A549 (cell line): ENCODE measurements at regions of chr7 and their contacts with region 1.

Region 1: DNA sequence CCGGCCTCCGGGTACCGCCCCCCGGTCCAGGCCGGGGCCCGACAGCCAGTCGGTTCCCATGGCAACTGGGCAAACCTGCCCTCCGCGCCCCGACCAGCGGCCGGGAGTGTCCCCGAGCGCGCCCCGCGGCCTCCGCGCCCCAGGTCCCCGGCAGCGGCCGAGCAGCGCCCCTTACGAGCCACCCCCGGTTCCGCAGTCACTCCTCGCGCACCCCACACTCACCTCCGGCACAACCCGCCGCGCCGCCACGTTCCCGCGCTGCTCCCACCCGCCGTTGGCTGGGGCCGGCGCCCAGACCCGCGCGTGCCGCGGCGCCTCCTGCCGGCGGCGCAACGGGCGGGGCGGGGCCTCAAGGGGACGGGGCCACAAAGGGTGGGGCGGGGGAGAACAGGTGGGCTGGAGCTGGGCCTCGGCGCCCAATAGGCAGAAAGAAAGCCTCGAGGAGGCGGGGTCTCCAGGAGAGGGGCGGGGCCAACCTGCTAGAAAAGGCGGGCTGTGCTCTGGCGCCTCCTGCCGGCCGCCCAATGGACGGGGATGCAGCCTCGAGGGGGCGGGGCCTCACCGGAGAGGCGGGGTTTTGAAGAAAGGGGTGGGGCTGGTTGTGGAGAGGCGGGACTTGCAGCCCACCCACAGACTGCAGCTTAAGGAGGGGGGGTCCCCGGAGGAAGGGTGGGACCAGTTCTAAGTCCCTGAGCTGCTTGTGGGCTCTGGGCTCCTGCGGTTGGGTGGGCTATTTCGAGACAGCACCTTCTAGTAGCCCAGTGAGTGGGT is at the start of gene RADIL:
- DNase-seq: peak; percentile 90 to 95
- ATAC-seq: peak; percentile 91 to 96
- H3K4me3 ChIP-seq: peak within 1 kb of the TSS; percentile 71
- H3K27ac ChIP-seq: peak within 1 kb of the TSS; percentile 63 to 87
- H3K4me1 ChIP-seq: 0 out of 3 replicates have a peak, but pooled peaks cover 4% of the 10 kb centered on the region
- CTCF ChIP-seq: peak; percentile 85
- EP300 ChIP-seq: no peak
- POLR2A ChIP-seq: peak; percentile 29; the same call in 1 of the 2 replicates
- RAD21 ChIP-seq: peak; percentile 57 to 71
- polyA plus RNA-seq, gene RADIL: 1.0 TPM in 2 replicates

Region 2: DNA sequence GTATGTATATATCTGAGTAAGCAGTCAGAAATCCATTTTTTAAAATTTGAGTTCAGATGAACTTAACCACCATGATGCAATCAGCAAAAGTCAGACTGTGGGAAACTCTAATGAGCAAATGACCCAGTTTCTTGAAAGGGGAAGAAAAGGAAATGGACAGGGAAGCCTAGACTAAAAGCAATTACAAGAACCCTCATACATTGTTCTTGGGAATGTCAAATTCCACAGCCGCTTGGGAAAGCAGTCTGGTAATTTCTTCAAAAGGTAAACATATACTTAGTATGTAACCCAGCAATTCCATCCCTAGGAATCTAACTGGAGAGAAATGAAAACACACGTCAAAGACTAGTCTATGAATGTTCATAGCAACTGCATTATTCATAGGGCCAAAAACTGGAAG is 217.9 kb before region 1 on chr7:
- CTCF ChIA-PET with region 1: no interaction called
- POLR2A ChIA-PET with region 1: no interaction called
- DNase-seq: peak in 1 of 2 experiments; percentile 81
- ATAC-seq: peak; percentile 86 to 90; a peak in 5 of 6 replicates
- H3K4me3 ChIP-seq: no peak overlapping the region
- H3K27ac ChIP-seq: peak overlapping the region; percentile 63 to 78
- H3K4me1 ChIP-seq: peaks cover 19% of the 10 kb centered on the region
- CTCF ChIP-seq: no peak
- EP300 ChIP-seq: peak in 1 of 2 experiments; percentile 47; a peak in 2 of 5 replicates
- POLR2A ChIP-seq: no peak
- RAD21 ChIP-seq: no peak

Region 3: GRCh38 chr7:4797858-4798705 is 85.5 kb before region 1 on chr7:
- CTCF ChIA-PET with region 1: interaction called, 39 read pairs
- POLR2A ChIA-PET with region 1: no interaction called
- DNase-seq: peak; percentile 63 to 73
- ATAC-seq: peak; percentile 51 to 85
- H3K4me3 ChIP-seq: no peak overlapping the region
- H3K27ac ChIP-seq: peak overlapping the region in 1 of 2 experiments; percentile 39; a peak in 1 of 6 replicates
- H3K4me1 ChIP-seq: no peaks in the 10 kb centered on the region
- CTCF ChIP-seq: peak; percentile 96
- EP300 ChIP-seq: no peak
- POLR2A ChIP-seq: no peak
- RAD21 ChIP-seq: peak; percentile 75 to 83

Region 4: DNA sequence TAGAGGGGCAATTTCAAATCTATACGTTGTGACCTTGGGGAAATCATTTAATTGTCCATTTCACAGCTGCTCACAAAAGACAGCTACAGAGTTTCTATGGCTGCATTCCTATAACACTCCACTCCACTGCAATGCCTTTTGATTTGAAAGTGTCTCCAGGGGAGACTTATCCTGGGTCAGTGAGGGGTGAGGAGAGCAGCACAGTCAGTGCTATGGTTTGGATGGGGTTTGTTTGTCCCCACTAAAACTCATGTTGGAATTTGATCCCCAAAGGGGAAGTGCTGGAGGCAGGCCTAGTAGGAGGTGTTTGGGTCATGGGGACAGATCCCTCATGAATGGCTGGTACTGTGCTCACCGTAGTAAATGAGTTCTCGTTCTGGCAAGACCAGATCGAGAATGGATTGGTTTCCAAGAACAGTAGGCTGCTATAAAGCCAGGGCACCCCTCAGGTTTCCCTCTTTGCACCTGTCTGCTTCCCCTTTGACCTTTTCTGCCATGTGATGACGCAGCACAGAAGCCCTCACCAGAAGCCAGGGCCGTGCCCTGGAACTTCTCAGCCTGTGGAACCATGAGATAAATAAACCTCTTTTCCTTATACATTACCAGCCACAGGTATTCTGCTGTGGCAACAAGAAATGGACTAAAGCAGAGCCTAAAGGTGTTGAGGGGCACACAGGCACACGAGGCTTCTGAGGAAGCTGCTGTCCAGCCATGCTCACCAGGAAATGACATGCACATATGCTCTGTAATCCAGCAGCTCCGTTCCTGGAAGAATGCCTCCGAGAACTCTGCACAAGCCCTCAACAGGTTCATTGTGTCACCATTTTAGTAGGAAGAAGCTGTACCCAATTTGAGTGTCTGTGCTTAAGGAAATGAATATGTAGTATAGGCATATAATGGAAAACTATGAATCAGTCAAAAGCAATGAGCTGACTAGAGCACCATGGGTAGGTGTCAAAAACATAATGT is 16.7 kb before region 1 on chr7:
- CTCF ChIA-PET with region 1: interaction called, 17 read pairs
- POLR2A ChIA-PET with region 1: no interaction called
- DNase-seq: no peak
- ATAC-seq: no peak
- H3K4me3 ChIP-seq: no peak overlapping the region
- H3K27ac ChIP-seq: no peak overlapping the region
- H3K4me1 ChIP-seq: no peaks in the 10 kb centered on the region
- CTCF ChIP-seq: no peak
- EP300 ChIP-seq: no peak
- POLR2A ChIP-seq: no peak
- RAD21 ChIP-seq: no peak

Region 5: DNA sequence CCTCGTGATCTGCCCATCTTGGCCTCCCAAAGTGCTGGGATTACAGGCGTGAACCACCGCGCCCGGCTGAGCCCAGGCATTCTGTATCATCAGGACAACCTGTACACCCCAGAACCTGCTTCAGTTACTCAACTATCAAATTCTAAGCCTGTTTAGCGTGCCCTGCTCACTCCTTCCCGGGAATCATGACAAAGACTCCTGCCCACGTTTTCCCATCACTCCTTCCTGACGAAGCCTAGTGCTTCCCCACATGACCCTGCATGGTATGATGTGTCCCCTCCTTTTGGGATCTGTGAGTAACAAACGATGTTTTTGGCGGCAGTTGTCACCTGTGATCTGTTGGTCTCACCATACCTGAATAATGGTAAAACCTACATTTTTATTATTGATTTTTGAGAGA is 12.2 kb after region 1 on chr7:
- CTCF ChIA-PET with region 1: interaction called, 36 read pairs
- POLR2A ChIA-PET with region 1: interaction called, 3 read pairs
- DNase-seq: no peak
- ATAC-seq: no peak
- H3K4me3 ChIP-seq: no peak overlapping the region
- H3K27ac ChIP-seq: no peak overlapping the region
- H3K4me1 ChIP-seq: no peaks in the 10 kb centered on the region
- CTCF ChIP-seq: no peak
- EP300 ChIP-seq: no peak
- POLR2A ChIP-seq: no peak
- RAD21 ChIP-seq: no peak